Mammary epithelial cell (primary cell): ENCODE measurements at regions of chrX and their contacts with region 1.

Region 1: GRCh38 chrX:3576886-3577501 is 136.5 kb downstream of the PRKX start:
- DNase-seq: no peak
- H3K4me3 ChIP-seq: no peak overlapping the region
- H3K27ac ChIP-seq: no peak overlapping the region
- H3K4me1 ChIP-seq: no peaks in the 10 kb centered on the region
- H3K27me3 ChIP-seq: no peaks in the 10 kb centered on the region
- CTCF ChIP-seq: no peak

Region 2: DNA sequence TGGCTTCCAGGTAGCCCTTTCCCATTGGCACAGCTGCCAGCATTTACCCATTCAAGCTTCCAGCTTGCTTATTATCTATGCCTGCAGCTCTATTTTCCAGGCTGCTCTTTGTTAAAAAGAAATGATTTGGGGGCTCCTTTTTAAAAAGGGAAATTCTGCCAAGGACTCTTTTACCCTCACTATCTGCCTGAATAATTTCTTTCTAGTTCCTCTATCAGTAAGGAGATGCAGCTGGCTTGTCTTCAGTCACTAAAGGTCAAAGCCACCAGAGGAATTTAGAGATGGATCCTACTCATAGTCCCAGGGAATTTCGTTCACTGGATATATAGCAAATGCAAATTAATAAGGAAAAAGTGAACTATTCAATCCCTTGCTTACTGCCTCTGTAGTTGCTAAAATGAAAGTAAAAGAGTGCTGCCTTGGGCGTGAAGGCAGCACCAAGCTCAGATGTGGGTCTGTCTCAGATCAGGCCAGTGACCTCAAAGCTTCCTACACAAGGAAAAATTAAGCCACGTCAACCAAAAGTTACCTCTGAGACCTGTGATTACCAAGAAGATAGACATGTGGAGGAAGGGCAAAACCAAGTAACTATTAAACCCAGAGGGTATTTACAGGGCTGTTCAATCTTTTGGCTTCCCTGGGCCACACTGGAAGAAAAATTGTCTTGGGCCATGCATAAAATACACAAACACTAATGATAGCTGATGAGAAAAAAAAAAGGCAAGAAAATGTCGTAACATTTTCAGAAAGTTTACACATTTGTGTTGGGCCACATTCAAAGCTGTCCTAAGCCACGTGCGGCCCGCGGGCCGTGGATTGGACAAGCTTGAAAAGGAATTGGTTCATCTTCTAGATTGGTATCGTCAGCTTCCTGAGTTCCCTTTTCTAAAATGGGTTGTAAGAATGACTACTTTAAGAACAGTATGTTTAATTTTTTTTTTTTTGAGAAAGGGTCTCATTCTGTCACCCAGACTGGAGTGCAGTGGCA is 530.4 kb before region 1 on chrX:
- CTCF ChIA-PET with region 1: no interaction called
- dilution Hi-C with region 1: no loop called
- in situ Hi-C with region 1: no loop called
- intact Hi-C with region 1: no loop called
- DNase-seq: no peak
- H3K4me3 ChIP-seq: no peak overlapping the region
- H3K27ac ChIP-seq: no peak overlapping the region
- H3K4me1 ChIP-seq: no peaks in the 10 kb centered on the region
- H3K27me3 ChIP-seq: no peaks in the 10 kb centered on the region
- CTCF ChIP-seq: no peak

Region 3: GRCh38 chrX:3621414-3621813 is 44.4 kb after region 1 on chrX:
- CTCF ChIA-PET with region 1: no interaction called
- dilution Hi-C with region 1: loop called (anchors 5 kb)
- in situ Hi-C with region 1: no loop called
- intact Hi-C with region 1: no loop called
- DNase-seq: no peak
- H3K4me3 ChIP-seq: no peak overlapping the region
- H3K27ac ChIP-seq: no peak overlapping the region
- H3K4me1 ChIP-seq: no peaks in the 10 kb centered on the region
- H3K27me3 ChIP-seq: no peaks in the 10 kb centered on the region
- CTCF ChIP-seq: no peak